GM12878 (cell line): ENCODE measurements at regions of chr2 and their contacts with region 1.

Region 1: GRCh38 chr2:63841254-63842022 is at the start of gene UGP2:
- DNase-seq: peak; percentile 62
- ATAC-seq: peak; percentile 85
- H3K4me3 ChIP-seq: peak within 1 kb of the TSS; percentile 73
- H3K27ac ChIP-seq: peak within 1 kb of the TSS; percentile 98
- H3K4me1 ChIP-seq: no peaks in the 10 kb centered on the region
- H3K27me3 ChIP-seq: no peaks in the 10 kb centered on the region
- CTCF ChIP-seq: peak in 2 of 3 experiments; percentile 9 to 27; a peak in 1 of 6 replicates
- EP300 ChIP-seq: 0 out of 4 replicates have a peak, but pooled peaks of 1 of the 2 experiments have one; percentile 20
- POLR2A ChIP-seq: peak; percentile 77
- RAD21 ChIP-seq: no peak
- polyA plus RNA-seq, gene UGP2: 81.0 to 89.0 TPM

Region 2: GRCh38 chr2:63588385-63589147 is 252.9 kb before region 1 on chr2 and contains the starts of genes MDH1 and WDPCP:
- CTCF ChIA-PET with region 1: interaction called, 3 read pairs
- POLR2A ChIA-PET with region 1: interaction called, 10 read pairs
- RAD21 ChIA-PET with region 1: no interaction called
- SMC1A ChIA-PET with region 1: interaction called, 8 read pairs
- in situ Hi-C with region 1: no loop called
- intact Hi-C with region 1: loop called (anchors 5 kb)
- DNase-seq: peak; percentile 99
- ATAC-seq: peak; percentile 91
- H3K4me3 ChIP-seq: peak within 1 kb of the TSS; percentile 99
- H3K27ac ChIP-seq: peak within 1 kb of the TSS; percentile 93
- H3K4me1 ChIP-seq: peaks cover 6% of the 10 kb centered on the region
- H3K27me3 ChIP-seq: no peaks in the 10 kb centered on the region
- CTCF ChIP-seq: no peak
- EP300 ChIP-seq: peak in 1 of 2 experiments; percentile 37; a peak in 1 of 4 replicates
- POLR2A ChIP-seq: peak; percentile 89
- RAD21 ChIP-seq: no peak
- polyA plus RNA-seq, gene MDH1: 1,221 to 1,581 TPM
- polyA plus RNA-seq, gene WDPCP: 2.1 to 2.7 TPM

Region 3: GRCh38 chr2:63792530-63792929 is 48.9 kb before region 1 on chr2:
- CTCF ChIA-PET with region 1: no interaction called
- POLR2A ChIA-PET with region 1: no interaction called
- RAD21 ChIA-PET with region 1: no interaction called
- SMC1A ChIA-PET with region 1: no interaction called
- in situ Hi-C with region 1: no loop called
- intact Hi-C with region 1: no loop called
- DNase-seq: no peak
- ATAC-seq: no peak
- H3K4me3 ChIP-seq: no peak overlapping the region
- H3K27ac ChIP-seq: no peak overlapping the region
- H3K4me1 ChIP-seq: no peaks in the 10 kb centered on the region
- H3K27me3 ChIP-seq: no peaks in the 10 kb centered on the region
- CTCF ChIP-seq: no peak
- EP300 ChIP-seq: no peak
- POLR2A ChIP-seq: no peak
- RAD21 ChIP-seq: no peak

Region 4: DNA sequence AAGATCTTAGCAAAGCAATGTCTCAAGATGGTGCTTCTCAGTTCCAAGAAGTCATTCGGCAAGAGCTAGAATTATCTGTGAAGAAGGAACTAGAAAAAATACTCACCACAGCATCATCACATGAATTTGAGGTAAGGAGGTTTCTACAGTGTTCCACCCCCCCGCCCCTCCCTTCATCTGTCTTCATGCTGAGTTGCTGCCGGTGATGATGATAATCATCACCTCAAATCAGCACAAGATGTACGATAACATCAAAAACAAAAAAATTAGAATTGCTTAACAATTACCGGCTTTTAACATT is 14.8 kb after region 1 on chr2:
- CTCF ChIA-PET with region 1: interaction called, 36 read pairs
- POLR2A ChIA-PET with region 1: interaction called, 20 read pairs
- RAD21 ChIA-PET with region 1: interaction called, 9 read pairs
- SMC1A ChIA-PET with region 1: interaction called, 90 read pairs
- in situ Hi-C with region 1: no loop called
- intact Hi-C with region 1: no loop called
- DNase-seq: no peak
- ATAC-seq: no peak
- H3K4me3 ChIP-seq: no peak overlapping the region
- H3K27ac ChIP-seq: no peak overlapping the region
- H3K4me1 ChIP-seq: no peaks in the 10 kb centered on the region
- H3K27me3 ChIP-seq: no peaks in the 10 kb centered on the region
- CTCF ChIP-seq: no peak
- EP300 ChIP-seq: no peak
- POLR2A ChIP-seq: no peak
- RAD21 ChIP-seq: no peak

Region 5: DNA sequence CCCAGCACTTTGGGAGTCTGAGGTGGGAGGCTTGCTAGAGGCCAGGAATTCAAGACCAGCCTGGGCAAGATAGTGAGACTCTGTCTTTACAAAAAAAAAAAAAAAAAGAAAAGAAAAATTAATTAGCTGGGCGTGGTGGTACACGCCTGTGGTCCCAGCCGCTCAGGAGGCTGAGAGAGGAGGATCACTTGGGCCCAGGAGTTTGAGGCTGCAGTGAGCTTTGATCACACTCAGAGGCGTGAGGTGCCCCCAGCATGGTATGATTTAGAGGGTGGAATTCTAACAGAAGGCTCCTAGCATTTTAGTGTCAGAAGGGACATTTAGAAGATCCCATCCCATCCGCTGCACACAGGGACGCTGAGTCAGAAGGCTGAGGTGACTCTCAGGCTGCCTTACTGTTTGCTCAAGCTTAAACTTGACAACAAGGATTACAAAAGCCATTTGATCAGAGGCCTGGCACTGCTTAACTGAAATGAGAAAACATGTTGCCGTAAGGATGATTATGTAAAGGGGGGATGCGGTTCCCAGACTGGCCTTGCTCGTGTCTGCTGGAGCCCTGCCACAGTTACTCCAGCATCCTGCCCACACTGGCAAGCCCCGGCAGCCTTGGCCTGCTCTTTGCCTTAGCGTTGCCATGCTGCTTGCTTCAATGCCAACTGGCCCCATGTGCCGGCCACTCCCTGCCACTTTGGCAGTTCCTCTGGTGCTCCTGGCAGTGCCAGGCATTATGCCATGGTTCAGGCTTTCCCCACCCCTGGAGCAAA is 1102.1 kb after region 1 on chr2:
- CTCF ChIA-PET with region 1: no interaction called
- POLR2A ChIA-PET with region 1: no interaction called
- RAD21 ChIA-PET with region 1: no interaction called
- SMC1A ChIA-PET with region 1: no interaction called
- in situ Hi-C with region 1: no loop called
- intact Hi-C with region 1: no loop called
- DNase-seq: no peak
- ATAC-seq: no peak
- H3K4me3 ChIP-seq: no peak overlapping the region
- H3K27ac ChIP-seq: no peak overlapping the region
- H3K4me1 ChIP-seq: peaks cover 63% of the 10 kb centered on the region
- H3K27me3 ChIP-seq: no peaks in the 10 kb centered on the region
- CTCF ChIP-seq: no peak
- EP300 ChIP-seq: no peak
- POLR2A ChIP-seq: no peak
- RAD21 ChIP-seq: no peak